Caco-2 (cell line): ENCODE measurements at regions of chr11 and their contacts with region 1.

Region 1: GRCh38 chr11:123799438-123799837 is 6.7 kb downstream of the OR6M1 start:
- DNase-seq: no peak
- H3K4me3 ChIP-seq: no peak overlapping the region
- H3K4me3 Mint-ChIP-seq: no peak overlapping the region
- H3K27ac Mint-ChIP-seq: no peak overlapping the region
- H3K4me1 ChIP-seq: peaks cover 1% of the 10 kb centered on the region; the same call in 1 of the 2 replicates
- H3K4me1 Mint-ChIP-seq: peaks cover 26% of the 10 kb centered on the region
- H3K27me3 ChIP-seq: no peaks in the 10 kb centered on the region
- H3K27me3 Mint-ChIP-seq: peaks cover 3% of the 10 kb centered on the region
- CTCF ChIP-seq: no peak

Region 2: DNA sequence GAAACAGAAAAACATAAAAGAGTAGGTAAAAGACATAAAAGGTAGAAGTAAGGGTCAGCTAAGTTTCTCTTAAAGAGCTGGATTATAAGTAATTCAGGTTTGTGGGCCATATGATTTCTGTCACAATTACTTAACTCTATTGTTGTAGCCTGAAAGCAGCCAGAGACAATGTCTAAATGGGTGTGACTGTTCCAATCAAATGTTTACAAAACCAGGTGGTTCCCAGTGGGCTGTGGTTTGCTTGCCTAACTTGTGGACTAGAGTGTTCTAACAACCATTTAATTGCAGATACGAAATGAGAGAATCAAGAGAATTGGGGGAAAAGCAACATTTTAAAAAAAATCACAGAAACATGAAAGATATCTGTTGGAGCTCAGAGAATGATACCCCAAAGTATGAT is 15.9 kb before region 1 on chr11:
- CTCF ChIA-PET with region 1: no interaction called
- POLR2A ChIA-PET with region 1: no interaction called
- intact Hi-C with region 1: loop called (anchors 1 kb)
- DNase-seq: no peak
- H3K4me3 ChIP-seq: no peak overlapping the region
- H3K4me3 Mint-ChIP-seq: no peak overlapping the region
- H3K27ac Mint-ChIP-seq: no peak overlapping the region
- H3K4me1 ChIP-seq: no peaks in the 10 kb centered on the region
- H3K4me1 Mint-ChIP-seq: no peaks in the 10 kb centered on the region
- H3K27me3 ChIP-seq: no peaks in the 10 kb centered on the region
- H3K27me3 Mint-ChIP-seq: peaks cover 3% of the 10 kb centered on the region
- CTCF ChIP-seq: no peak

Region 3: DNA sequence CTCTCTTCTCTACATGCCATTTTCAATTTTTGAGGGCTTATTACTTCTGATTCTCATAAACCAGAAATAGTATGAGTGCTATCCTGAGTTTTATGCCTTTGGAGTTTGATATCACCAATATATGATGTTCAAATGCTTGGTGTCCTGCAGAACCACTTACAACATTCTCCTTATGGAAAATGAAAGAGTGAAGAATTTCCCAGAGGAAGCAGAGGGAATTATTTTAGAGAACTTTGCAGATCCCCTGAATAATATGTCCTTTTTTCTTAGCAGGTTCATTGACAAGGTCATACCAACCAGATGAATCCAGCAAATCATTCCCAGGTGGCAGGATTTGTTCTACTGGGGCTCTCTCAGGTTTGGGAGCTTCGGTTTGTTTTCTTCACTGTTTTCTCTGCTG is 139.9 kb after region 1 on chr11 and contains the start of gene OR4D5:
- CTCF ChIA-PET with region 1: no interaction called
- POLR2A ChIA-PET with region 1: no interaction called
- intact Hi-C with region 1: no loop called
- DNase-seq: no peak
- H3K4me3 ChIP-seq: no peak within 1 kb of the TSS
- H3K4me3 Mint-ChIP-seq: no peak within 1 kb of the TSS
- H3K27ac Mint-ChIP-seq: no peak within 1 kb of the TSS
- H3K4me1 ChIP-seq: peaks cover 11% of the 10 kb centered on the region
- H3K4me1 Mint-ChIP-seq: peaks cover 7% of the 10 kb centered on the region
- H3K27me3 ChIP-seq: no peaks in the 10 kb centered on the region
- H3K27me3 Mint-ChIP-seq: peaks cover 5% of the 10 kb centered on the region
- CTCF ChIP-seq: no peak
- total RNA-seq, gene OR4D5: not detected in 2 replicates

Region 4: GRCh38 chr11:124052966-124053365 is 253.5 kb after region 1 on chr11:
- CTCF ChIA-PET with region 1: no interaction called
- POLR2A ChIA-PET with region 1: no interaction called
- intact Hi-C with region 1: no loop called
- DNase-seq: no peak
- H3K4me3 ChIP-seq: no peak overlapping the region
- H3K4me3 Mint-ChIP-seq: no peak overlapping the region
- H3K27ac Mint-ChIP-seq: no peak overlapping the region
- H3K4me1 ChIP-seq: no peaks in the 10 kb centered on the region
- H3K4me1 Mint-ChIP-seq: no peaks in the 10 kb centered on the region
- H3K27me3 ChIP-seq: no peaks in the 10 kb centered on the region
- H3K27me3 Mint-ChIP-seq: peaks cover 19% of the 10 kb centered on the region
- CTCF ChIP-seq: no peak